CD14-positive monocyte (primary cell): ENCODE measurements at regions of chr13 and their contacts with region 1.

Region 1: DNA sequence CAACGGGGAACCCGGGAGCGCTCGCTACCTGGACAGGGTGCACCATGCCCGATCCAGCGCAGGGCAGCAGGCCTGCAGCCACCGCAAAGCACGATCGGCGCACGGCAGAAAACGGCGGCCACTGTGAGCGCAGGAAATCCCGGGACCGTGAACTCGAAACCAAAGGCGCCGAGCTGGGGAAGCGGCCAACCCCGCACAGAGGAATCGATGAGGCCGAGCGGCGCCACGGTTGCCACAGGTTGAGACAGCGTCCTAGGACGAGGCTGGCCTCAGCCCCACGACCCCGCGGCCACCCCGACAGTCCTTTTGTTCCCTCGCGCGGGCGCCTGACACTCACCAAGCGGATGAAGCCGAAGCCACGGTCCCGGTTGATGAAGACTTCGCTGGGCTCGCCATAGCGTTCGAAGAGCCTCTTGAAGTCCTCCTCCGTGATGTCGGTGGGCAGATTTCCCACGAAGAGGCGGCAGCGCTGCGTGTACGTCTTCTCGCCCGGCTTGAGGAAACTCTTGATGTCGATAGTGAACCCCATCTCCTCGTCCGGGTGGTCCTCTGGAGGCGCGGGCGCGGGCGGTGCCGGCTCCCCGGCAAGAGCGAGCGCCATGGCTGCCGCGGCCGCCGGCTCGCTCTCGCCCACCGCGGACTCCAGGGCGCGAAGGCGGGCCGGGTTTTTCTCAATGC is 557 bp downstream of the PSPC1 start:
- DNase-seq: peak; percentile 26 to 62 (median 41)
- H3K4me3 ChIP-seq: peak overlapping the region; percentile 97 to 99 (median 98)
- H3K4me3 Mint-ChIP-seq: peak overlapping the region; percentile 94 to 97
- H3K27ac ChIP-seq: peak overlapping the region; percentile 98
- H3K27ac Mint-ChIP-seq: peak overlapping the region; percentile 95 to 98 (median 98)
- H3K4me1 ChIP-seq: peaks cover 12 to 16% of the 10 kb centered on the region in 2 donors
- H3K4me1 Mint-ChIP-seq: peaks cover 6% of the 10 kb centered on the region
- H3K27me3 ChIP-seq: no peaks in the 10 kb centered on the region
- H3K27me3 Mint-ChIP-seq: peaks cover 0 to 2% (median 2%) of the 10 kb centered on the region in 3 donors
- CTCF ChIP-seq: no peak

Region 2: GRCh38 chr13:19607523-19608078 is 174.6 kb before region 1 on chr13:
- intact Hi-C with region 1: no loop called
- DNase-seq: no peak
- H3K4me3 ChIP-seq: no peak overlapping the region
- H3K4me3 Mint-ChIP-seq: no peak overlapping the region
- H3K27ac ChIP-seq: no peak overlapping the region
- H3K27ac Mint-ChIP-seq: no peak overlapping the region
- H3K4me1 ChIP-seq: no peaks in the 10 kb centered on the region
- H3K4me1 Mint-ChIP-seq: peaks cover under 1% of the 10 kb centered on the region
- H3K27me3 ChIP-seq: peaks cover 15 to 19% of the 10 kb centered on the region in 2 donors
- H3K27me3 Mint-ChIP-seq: peaks cover 18 to 29% (median 22%) of the 10 kb centered on the region in 3 donors
- CTCF ChIP-seq: no peak

Region 3: GRCh38 chr13:19633479-19634255 is 148.5 kb before region 1 on chr13 and contains the start of gene MPHOSPH8:
- intact Hi-C with region 1: loop called in 1 of 2 experiments (anchors 5 kb)
- DNase-seq: peak; percentile 94 to 96 (median 96)
- H3K4me3 ChIP-seq: peak within 1 kb of the TSS; percentile 70 to 89 (median 81)
- H3K4me3 Mint-ChIP-seq: peak within 1 kb of the TSS; percentile 100
- H3K27ac ChIP-seq: peak within 1 kb of the TSS; percentile 71 to 96
- H3K27ac Mint-ChIP-seq: peak within 1 kb of the TSS; percentile 97 to 100 (median 99)
- H3K4me1 ChIP-seq: peaks cover 21 to 23% of the 10 kb centered on the region in 2 donors
- H3K4me1 Mint-ChIP-seq: peaks cover 22% of the 10 kb centered on the region
- H3K27me3 ChIP-seq: no peaks in the 10 kb centered on the region
- H3K27me3 Mint-ChIP-seq: no peaks in the 10 kb centered on the region
- CTCF ChIP-seq: no peak
- polyA plus RNA-seq, gene MPHOSPH8: 2.1 to 13.5 (median 5.3) TPM

Region 4: GRCh38 chr13:19959831-19960652 is 177.9 kb after region 1 on chr13:
- intact Hi-C with region 1: loop called in 1 of 2 experiments (anchors 5 kb)
- DNase-seq: peak; percentile 86 to 88 (median 88)
- H3K4me3 ChIP-seq: peak overlapping the region; percentile 91 to 99 (median 99)
- H3K4me3 Mint-ChIP-seq: peak overlapping the region; percentile 92 to 93
- H3K27ac ChIP-seq: peak overlapping the region; percentile 84 to 94
- H3K27ac Mint-ChIP-seq: peak overlapping the region; percentile 92 to 98 (median 94)
- H3K4me1 ChIP-seq: peaks cover 29 to 51% of the 10 kb centered on the region in 2 donors
- H3K4me1 Mint-ChIP-seq: peaks cover 32% of the 10 kb centered on the region
- H3K27me3 ChIP-seq: no peaks in the 10 kb centered on the region
- H3K27me3 Mint-ChIP-seq: no peaks in the 10 kb centered on the region
- CTCF ChIP-seq: peak; percentile 93